HEK293 (cell line): ENCODE measurements at regions of chr6 and their contacts with region 1.

Region 1: DNA sequence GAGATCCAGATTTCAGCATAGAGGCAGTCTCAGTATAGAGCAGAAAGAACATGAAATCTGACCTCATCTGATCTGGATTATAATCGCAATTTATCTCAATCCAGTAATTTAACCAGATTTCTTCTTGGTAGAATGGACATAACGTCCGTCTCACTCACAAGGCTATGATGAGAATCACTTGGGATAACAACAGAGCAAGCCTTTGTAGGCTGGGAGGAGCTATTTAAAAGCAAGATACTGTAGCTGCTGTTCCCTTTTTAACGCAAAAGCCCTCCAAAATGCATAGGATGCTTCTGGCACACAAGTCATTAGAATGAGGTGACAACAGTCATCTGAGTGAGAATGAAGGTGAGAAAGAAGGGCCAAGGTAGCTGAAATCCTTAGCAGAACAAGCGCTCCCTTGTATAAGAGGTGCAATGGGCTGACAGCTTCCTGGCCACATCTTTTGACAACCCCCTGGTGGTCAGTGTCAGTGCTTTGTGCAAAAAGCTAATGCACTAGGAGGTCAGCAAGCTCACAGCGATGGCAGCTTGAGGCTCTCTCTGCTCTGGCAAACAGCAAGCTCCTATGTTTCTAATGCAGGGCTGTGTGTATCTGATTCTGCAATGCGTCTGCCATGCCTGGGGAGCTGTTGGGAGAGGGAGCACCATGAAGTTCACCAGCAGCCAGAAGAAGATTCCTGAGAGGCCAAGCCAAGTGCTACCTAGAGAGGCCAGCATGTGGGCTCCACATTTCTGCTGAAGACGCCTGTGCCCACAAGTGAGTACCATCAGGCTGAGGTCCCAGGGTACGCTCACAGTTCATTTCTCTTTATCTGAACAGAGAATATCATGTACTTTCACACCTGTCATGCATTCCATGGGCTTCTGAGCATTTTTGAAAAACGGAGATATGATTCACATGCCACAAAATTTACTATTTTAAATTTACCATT is 16.2 kb downstream of the METTL24 start:
- H3K4me3 ChIP-seq: no peak overlapping the region
- H3K27ac ChIP-seq: no peak overlapping the region
- H3K4me1 ChIP-seq: no peaks in the 10 kb centered on the region
- CTCF ChIP-seq: no peak; the same call in 1 of the 2 replicates

Region 2: GRCh38 chr6:110329714-110330436 is 12.1 kb before region 1 on chr6:
- CTCF ChIA-PET with region 1: interaction called, 19 read pairs
- POLR2A ChIA-PET with region 1: no interaction called
- H3K4me3 ChIP-seq: no peak overlapping the region
- H3K27ac ChIP-seq: no peak overlapping the region
- H3K4me1 ChIP-seq: no peaks in the 10 kb centered on the region; the same call in 1 of the 2 replicates
- CTCF ChIP-seq: no peak

Region 3: DNA sequence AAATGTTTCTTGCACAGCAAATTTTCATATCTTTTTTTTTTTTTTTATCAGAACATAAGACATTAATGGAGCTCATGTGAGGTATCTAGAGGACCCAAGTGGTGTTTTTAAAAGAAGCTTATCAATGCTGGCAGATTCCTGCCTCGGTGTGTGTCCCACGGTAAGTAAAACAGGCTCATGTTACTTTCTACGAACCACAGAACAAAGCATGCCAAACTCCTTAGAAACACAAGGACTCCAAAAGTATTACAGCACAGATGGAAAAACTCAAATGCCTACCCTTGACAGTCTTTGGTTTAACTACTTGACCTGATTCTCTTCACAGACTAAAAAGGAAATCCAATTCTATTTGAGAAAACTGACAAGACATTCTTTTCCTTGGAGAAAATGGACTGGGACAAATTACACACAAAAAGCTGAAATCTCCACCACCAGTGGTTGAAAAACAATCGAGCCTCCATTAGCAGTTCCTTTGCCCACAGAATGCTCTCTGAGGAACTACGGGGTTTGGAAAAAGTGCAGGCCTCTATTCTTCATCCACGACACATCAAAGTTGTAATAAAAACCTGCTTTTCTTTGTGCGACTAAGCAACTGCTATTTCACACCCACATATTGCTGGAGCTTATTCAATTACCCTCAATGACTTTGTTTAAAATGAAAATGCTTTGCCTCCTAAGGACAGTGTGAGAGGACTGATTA is 10.8 kb after region 1 on chr6:
- CTCF ChIA-PET with region 1: interaction called, 23 read pairs
- POLR2A ChIA-PET with region 1: no interaction called
- H3K4me3 ChIP-seq: no peak overlapping the region
- H3K27ac ChIP-seq: no peak overlapping the region
- H3K4me1 ChIP-seq: no peaks in the 10 kb centered on the region
- CTCF ChIP-seq: no peak

Region 4: GRCh38 chr6:110981202-110981600 is 639.3 kb after region 1 on chr6:
- CTCF ChIA-PET with region 1: no interaction called
- POLR2A ChIA-PET with region 1: no interaction called
- H3K4me3 ChIP-seq: peak overlapping the region; percentile 97
- H3K27ac ChIP-seq: no peak overlapping the region; the same call in 1 of the 2 replicates
- H3K4me1 ChIP-seq: 0 out of 2 replicates have a peak, but pooled peaks cover 4% of the 10 kb centered on the region
- CTCF ChIP-seq: no peak